ENCODE measurements at regions of chr11 and their contacts with region 1.

Region 1: DNA sequence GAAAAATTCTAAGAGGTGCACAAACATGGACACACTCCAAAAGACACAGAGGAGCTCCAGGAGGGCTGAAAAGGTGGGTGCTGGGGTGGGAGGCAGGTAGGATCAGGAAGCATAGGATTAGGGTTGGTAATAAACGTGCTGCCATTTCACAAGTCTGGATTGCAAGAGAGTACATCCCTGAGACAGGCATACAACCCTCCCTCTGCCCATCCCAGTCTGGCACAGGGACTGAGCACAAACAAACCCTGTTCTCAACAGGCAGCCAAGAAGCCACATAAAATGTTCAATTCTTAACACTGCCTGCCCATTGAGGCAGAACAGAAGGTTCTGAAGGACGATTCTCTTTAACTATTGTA is 18.5 kb downstream of the SLC35F2 start:
- DNase-seq: no peak
- H3K4me3 Mint-ChIP-seq: no peak overlapping the region
- H3K27ac Mint-ChIP-seq: peak overlapping the region; percentile 96
- H3K4me1 Mint-ChIP-seq: peaks cover 57% of the 10 kb centered on the region
- H3K27me3 Mint-ChIP-seq: no peaks in the 10 kb centered on the region

Region 2: GRCh38 chr11:107827041-107827440 is 13.1 kb before region 1 on chr11:
- intact Hi-C with region 1: loop called (anchors 2 kb)
- DNase-seq: no peak
- H3K4me3 Mint-ChIP-seq: no peak overlapping the region
- H3K27ac Mint-ChIP-seq: no peak overlapping the region
- H3K4me1 Mint-ChIP-seq: peaks cover 8% of the 10 kb centered on the region
- H3K27me3 Mint-ChIP-seq: no peaks in the 10 kb centered on the region

Region 3: GRCh38 chr11:107928046-107928766 is 88.1 kb after region 1 on chr11 and contains the start of gene RAB39A:
- intact Hi-C with region 1: loop called (anchors 1 kb)
- DNase-seq: peak; percentile 73
- H3K4me3 Mint-ChIP-seq: peak within 1 kb of the TSS; percentile 71
- H3K27ac Mint-ChIP-seq: no peak within 1 kb of the TSS
- H3K4me1 Mint-ChIP-seq: peaks cover 8% of the 10 kb centered on the region
- H3K27me3 Mint-ChIP-seq: peaks cover 31% of the 10 kb centered on the region
- total RNA-seq, gene RAB39A: not detected in 2 replicates

Measured in activated T-helper 2 cell treated with anti-CD3 and anti-CD28 coated beads, Interferon-gamma antibody, Interleukin-2, Interleukin-4, amounts not matched to agents 10 μg/mL and 5 μg/mL and 100 μg/mL, durations not matched to agents 14 hours and 24 hours and 36 hours (primary cell).